Right ventricle myocardium inferior (tissue), 1 donor: ENCODE measurements at regions of chr16 and their contacts with region 1.

Region 1: GRCh38 chr16:85137323-85138072 is 25.2 kb upstream of the CIBAR2 start:
- DNase-seq: peak; percentile 95
- ATAC-seq: peak; percentile 93

Region 2: GRCh38 chr16:84898447-84898846 is 239.1 kb before region 1 on chr16:
- intact Hi-C with region 1: no loop called
- DNase-seq: no peak
- ATAC-seq: peak; percentile 26

Region 3: GRCh38 chr16:85086347-85087291 is 50.9 kb before region 1 on chr16:
- intact Hi-C with region 1: no loop called
- DNase-seq: peak; percentile 83
- ATAC-seq: peak; percentile 73

Region 4: DNA sequence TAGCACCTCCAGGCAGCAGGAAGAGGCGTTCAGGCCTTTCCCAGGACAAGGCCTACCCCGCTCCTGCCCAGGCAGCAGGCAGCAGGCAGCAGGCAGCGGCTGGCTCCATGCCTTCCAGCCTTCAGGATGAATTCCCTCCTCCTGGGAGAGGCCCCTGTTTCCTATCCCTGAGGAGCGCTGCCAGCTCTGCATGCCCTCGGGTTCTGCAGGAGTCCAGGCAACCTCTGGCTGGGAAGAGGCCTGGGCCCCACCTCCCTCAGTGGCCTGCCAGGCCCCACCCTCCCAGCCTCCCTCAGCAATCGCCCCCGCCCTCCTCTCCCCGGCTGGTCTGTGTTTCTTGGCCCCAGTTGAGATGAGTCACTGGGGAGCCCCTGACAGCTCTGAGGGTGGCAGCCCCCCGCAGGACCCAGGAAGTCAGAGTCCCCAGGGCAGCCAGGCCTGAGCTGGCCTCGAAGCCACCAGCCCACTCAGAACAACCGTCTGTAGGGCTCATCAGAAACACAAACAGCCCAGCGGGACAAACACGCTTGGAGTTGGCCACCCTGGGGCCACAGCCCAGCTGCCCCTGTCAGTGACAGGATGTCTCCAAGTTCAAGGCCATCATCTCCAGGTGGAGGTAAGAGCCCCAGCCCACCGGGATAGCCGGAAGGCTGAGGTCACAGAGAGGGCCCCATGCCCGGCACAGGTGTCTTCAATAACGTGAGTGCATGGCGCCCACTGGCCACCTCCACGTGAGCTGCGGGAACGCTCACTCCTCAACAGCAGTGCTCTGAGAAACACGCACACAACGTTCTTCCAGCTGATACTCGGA is 14.3 kb after region 1 on chr16:
- intact Hi-C with region 1: loop called (anchors 1 kb)
- DNase-seq: peak; percentile 87
- ATAC-seq: peak; percentile 77